PC-3 (cell line): ENCODE measurements at regions of chr14 and their contacts with region 1.

Region 1: GRCh38 chr14:75982266-75983018 is 647 bp upstream of the TGFB3 start:
- DNase-seq: peak; percentile 84
- ATAC-seq: peak; percentile 57
- H3K4me3 ChIP-seq: peak overlapping the region; percentile 96
- H3K27ac ChIP-seq: peak overlapping the region; percentile 85
- H3K4me1 ChIP-seq: peaks cover 43% of the 10 kb centered on the region
- H3K27me3 ChIP-seq: no peaks in the 10 kb centered on the region
- CTCF ChIP-seq: peak; percentile 51

Region 2: GRCh38 chr14:75577729-75578101 is 404.7 kb before region 1 on chr14:
- CTCF ChIA-PET with region 1: interaction called, 6 read pairs
- POLR2A ChIA-PET with region 1: no interaction called
- intact Hi-C with region 1: loop called (anchors 2 kb)
- DNase-seq: peak; percentile 87
- ATAC-seq: peak; percentile 89
- H3K4me3 ChIP-seq: peak overlapping the region; percentile 82
- H3K27ac ChIP-seq: no peak overlapping the region
- H3K4me1 ChIP-seq: peaks cover 9% of the 10 kb centered on the region
- H3K27me3 ChIP-seq: no peaks in the 10 kb centered on the region
- CTCF ChIP-seq: peak; percentile 86

Region 3: DNA sequence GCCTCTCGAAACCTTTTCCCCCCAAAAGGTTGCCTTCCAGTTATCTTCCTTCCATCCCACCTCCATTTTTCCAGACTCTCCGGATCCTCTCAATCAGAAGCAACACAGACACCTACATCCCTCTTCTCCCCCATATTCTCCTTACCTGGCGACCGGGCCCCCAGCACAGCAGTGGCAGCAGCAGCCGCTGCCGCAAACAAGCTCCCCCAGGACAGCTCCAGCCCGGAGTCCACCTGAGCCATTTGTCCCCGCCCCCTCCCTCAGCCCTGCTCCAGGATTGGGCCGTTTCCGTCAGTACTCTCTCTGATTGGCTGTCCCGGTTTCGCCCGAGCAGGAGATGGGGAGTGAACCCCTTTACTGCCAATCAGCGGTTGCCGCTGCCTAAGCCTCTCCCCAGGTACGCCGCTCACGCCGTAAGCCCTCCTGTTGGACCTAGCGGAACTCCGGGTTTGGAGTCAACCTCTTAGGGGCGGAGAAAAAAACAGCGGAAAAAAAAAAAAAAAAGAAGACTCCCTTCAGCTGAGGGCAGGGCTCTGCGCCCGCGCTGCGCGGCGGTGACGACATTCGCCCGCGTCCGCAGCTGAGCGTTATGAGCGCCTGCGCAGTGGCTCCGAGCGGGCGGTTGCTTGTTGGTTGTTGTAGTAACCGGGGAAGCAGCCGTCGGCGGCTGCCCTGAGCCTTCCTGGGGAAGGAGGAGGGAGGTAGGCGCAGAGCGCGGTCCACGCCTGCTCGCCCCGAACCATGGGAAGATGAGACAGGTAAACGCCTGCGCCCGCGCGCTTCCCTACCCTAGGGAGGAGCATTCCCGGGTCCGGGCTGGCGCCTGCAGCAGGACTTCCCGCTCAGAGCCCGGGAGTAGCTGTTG is 321.6 kb before region 1 on chr14 and contains the starts of genes ERG28 and TTLL5:
- CTCF ChIA-PET with region 1: interaction called, 3 read pairs
- POLR2A ChIA-PET with region 1: interaction called, 3 read pairs
- intact Hi-C with region 1: loop called (anchors 1 kb)
- DNase-seq: peak; percentile 98
- ATAC-seq: peak; percentile 96
- H3K4me3 ChIP-seq: peak within 1 kb of the TSS; percentile 96
- H3K27ac ChIP-seq: peak within 1 kb of the TSS; percentile 58
- H3K4me1 ChIP-seq: peaks cover 5% of the 10 kb centered on the region; the same call in 1 of the 2 replicates
- H3K27me3 ChIP-seq: no peaks in the 10 kb centered on the region
- CTCF ChIP-seq: no peak
- total RNA-seq, gene ERG28: 12.5 and 13.9 TPM in 2 replicates
- total RNA-seq, gene TTLL5: 34.7 and 40.3 TPM in 2 replicates

Region 4: DNA sequence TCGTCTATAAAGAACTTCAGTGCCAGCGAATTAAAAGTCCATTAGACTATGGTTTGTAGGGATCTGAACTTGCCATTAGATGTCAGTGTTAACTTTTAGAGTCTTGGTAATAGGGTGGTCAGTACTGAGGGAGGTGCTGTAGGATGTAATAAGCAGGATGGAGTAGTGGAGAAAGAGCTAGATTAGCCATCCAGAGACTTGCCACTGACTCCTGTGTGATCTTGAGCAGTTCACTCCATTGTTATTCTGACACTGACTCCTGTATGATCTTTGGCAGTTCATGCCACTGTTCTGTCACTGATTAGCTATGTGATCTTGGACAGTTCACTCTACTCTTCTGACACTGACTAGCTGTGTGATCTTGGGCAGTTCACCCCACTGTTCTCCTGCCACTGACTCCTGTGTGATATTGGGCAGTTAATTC is 187.8 kb before region 1 on chr14:
- CTCF ChIA-PET with region 1: interaction called, 42 read pairs
- POLR2A ChIA-PET with region 1: no interaction called
- intact Hi-C with region 1: loop called (anchors 1 kb)
- DNase-seq: peak; percentile 57
- ATAC-seq: peak; percentile 95
- H3K4me3 ChIP-seq: no peak overlapping the region
- H3K27ac ChIP-seq: no peak overlapping the region
- H3K4me1 ChIP-seq: no peaks in the 10 kb centered on the region
- H3K27me3 ChIP-seq: no peaks in the 10 kb centered on the region
- CTCF ChIP-seq: peak; percentile 70

Region 5: DNA sequence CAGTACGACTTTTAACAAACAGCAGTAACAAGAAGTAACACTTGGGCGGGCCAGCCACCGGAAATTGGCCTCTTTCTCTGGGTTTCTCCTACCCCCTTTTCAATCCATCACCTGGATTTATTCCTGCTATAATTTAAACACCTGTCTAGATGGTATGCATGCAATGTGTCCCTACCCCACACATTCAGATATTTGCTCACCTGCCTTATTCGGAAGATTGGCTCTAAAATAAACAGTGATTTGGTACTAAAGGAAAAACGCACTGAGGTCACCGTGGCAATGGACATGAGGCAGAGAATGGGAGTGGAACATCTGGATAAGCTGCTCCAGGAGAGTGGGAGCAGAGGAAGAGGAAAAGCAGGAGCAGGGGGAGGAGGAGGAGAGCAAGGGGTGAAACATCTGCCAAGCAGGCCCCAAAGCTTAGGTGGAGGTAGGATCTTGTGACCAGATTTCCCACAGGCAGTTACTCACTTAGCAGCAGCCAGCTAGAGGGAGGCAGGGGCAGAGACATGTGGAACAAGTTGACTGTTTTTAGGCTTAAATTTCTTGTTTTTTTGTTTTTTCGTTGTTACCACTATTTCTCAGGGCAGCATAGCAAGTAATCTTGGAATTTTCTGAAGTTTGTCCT is 170.5 kb before region 1 on chr14:
- CTCF ChIA-PET with region 1: no interaction called
- POLR2A ChIA-PET with region 1: no interaction called
- intact Hi-C with region 1: no loop called
- DNase-seq: no peak
- ATAC-seq: no peak
- H3K4me3 ChIP-seq: no peak overlapping the region
- H3K27ac ChIP-seq: no peak overlapping the region
- H3K4me1 ChIP-seq: no peaks in the 10 kb centered on the region
- H3K27me3 ChIP-seq: no peaks in the 10 kb centered on the region
- CTCF ChIP-seq: no peak

Region 6: GRCh38 chr14:75831458-75831857 is 151.0 kb before region 1 on chr14:
- CTCF ChIA-PET with region 1: interaction called, 11 read pairs
- POLR2A ChIA-PET with region 1: interaction called, 4 read pairs
- intact Hi-C with region 1: loop called (anchors 2 kb)
- DNase-seq: peak; percentile 87
- ATAC-seq: peak; percentile 62
- H3K4me3 ChIP-seq: peak overlapping the region; percentile 63
- H3K27ac ChIP-seq: peak overlapping the region; percentile 99
- H3K4me1 ChIP-seq: peaks cover 56% of the 10 kb centered on the region
- H3K27me3 ChIP-seq: no peaks in the 10 kb centered on the region
- CTCF ChIP-seq: no peak

Region 7: GRCh38 chr14:75906676-75907280 is 75.7 kb before region 1 on chr14:
- CTCF ChIA-PET with region 1: interaction called, 18 read pairs
- POLR2A ChIA-PET with region 1: interaction called, 5 read pairs
- intact Hi-C with region 1: loop called (anchors 1 kb)
- DNase-seq: peak; percentile 72
- ATAC-seq: no peak
- H3K4me3 ChIP-seq: no peak overlapping the region
- H3K27ac ChIP-seq: no peak overlapping the region
- H3K4me1 ChIP-seq: peaks cover 9% of the 10 kb centered on the region; the same call in 1 of the 2 replicates
- H3K27me3 ChIP-seq: no peaks in the 10 kb centered on the region
- CTCF ChIP-seq: peak; percentile 96

Region 8: DNA sequence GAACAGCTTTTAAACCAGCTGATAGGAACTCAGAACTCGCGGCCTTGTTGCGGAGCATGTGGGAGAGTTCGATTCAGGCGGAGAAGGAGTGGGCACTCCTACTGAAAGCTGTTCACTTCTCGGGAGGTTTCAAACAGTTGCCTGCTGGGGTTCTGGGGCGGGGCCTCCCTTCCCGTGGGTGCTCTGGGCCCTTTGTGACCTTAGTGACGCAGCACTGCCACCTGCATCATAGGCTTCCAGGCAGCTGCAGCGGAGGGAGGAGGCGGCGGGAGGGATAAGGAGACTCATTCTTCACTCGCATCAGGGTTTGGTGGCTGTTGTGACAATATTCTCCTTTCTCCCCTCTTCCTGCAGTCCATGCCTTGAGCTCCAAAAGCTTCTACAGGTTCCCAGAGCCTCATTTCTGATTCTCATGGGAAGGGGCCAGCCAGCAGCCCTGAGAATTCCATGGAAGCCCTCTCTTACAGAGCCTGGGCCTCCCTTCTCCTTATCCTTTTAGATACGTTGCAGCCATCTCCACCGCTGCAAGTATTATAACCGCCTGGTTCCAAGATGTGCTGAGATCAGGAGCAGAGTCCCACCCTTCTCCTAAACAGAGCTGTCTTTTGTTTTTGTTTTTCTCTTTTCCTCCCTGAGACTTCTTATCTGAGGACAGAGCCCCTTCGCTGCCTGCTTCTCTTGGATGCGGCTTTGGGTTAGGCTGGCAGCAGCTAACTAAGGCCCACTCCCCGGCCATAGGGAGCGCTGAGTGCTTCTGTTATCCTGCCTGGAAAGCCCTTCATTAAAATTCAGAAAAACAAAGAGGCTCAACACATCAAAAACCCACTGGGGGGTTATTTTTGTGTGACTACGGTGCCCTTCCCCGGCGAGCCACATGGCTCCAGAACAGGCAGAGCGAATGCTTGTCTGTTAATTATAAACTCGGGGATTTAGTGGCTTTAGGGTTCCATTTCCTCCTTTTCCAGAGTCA is 101.6 kb after region 1 on chr14:
- CTCF ChIA-PET with region 1: no interaction called
- POLR2A ChIA-PET with region 1: no interaction called
- intact Hi-C with region 1: no loop called
- DNase-seq: no peak
- ATAC-seq: no peak
- H3K4me3 ChIP-seq: no peak overlapping the region
- H3K27ac ChIP-seq: no peak overlapping the region
- H3K4me1 ChIP-seq: no peaks in the 10 kb centered on the region
- H3K27me3 ChIP-seq: no peaks in the 10 kb centered on the region
- CTCF ChIP-seq: no peak

Region 9: DNA sequence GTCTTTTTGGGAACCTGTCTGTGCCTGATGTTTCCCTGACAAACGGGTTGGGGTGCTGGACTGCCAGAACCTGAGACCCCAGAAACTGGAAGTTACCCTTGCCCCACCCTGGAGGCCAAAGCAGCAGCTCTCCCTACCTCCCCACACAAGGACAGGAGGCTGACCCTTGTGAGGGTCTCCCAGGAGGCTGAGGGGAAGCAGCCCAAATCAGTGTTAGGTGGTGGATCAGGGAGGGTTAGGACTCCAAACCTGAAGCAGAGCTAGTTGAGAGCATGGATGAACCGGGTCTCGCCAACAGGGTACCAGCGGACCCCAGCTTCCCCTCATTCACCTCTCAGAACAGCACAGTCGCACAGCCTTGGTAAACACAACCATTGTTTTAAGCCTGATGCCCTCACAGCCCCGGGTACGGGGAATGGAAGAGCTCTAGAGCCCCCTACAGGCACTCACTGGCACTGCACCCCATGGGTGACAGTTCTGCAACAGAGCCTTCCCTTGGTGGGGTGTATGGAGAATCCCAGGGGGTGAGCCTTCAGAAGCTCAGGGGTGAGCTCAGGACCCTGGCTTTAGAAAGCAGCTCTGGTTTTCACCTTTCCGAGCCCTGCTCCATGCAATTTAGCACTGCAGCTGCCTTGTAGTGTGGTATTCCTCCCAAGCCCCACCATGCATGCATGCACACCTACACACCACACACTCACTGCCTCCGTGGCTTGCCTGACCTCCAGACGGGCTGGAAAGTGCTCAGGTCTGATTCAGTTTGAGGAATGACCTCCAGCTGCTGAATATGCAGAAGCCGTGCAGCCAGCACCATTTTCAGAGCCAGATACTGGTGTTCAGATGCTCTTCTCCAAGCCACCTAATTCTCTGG is 404.7 kb after region 1 on chr14:
- CTCF ChIA-PET with region 1: no interaction called
- POLR2A ChIA-PET with region 1: no interaction called
- intact Hi-C with region 1: loop called (anchors 5 kb)
- DNase-seq: peak; percentile 83
- ATAC-seq: peak; percentile 99
- H3K4me3 ChIP-seq: no peak overlapping the region
- H3K27ac ChIP-seq: no peak overlapping the region
- H3K4me1 ChIP-seq: no peaks in the 10 kb centered on the region
- H3K27me3 ChIP-seq: peaks cover 61% of the 10 kb centered on the region
- CTCF ChIP-seq: peak; percentile 97